ENCODE measurements at regions of chr2 and their contacts with region 1.

Region 1: DNA sequence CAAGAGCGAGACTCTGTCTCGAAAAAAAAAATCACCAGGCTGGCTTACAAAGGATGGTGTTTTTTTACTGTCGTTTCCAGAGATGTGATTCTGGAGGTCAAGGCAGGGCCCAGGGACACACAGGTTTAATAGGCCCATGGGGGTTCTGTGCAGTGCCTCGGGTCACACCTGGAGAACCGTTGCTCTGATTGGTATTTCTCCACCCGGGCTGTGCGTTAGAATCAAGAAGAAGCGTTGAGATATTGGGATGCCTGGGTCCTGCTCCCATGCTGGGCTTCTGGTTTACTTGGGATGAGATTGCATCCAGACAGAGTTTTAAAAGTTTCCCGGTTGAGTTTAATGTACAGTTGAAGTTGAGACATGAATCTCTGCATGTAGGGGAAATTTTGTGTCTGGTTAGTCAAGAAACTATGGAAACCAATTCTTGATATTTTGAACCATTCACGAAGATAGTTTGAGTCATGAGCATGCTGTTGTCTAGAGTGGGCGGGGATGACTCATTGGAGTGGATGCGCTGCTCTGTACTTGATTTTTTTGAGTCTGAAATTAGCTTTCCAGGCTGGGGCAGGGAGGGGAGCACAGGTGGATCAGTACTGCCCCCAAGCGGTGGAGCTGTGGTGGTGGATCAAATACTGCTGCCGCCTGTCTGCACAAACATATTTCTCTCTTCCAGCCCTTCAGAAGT is 50.1 kb downstream of the GREB1 start:
- DNase-seq: peak; percentile 93
- H3K4me3 ChIP-seq: no peak overlapping the region
- H3K27ac ChIP-seq: no peak overlapping the region
- H3K4me1 ChIP-seq: peaks cover 13% of the 10 kb centered on the region
- H3K27me3 ChIP-seq: no peaks in the 10 kb centered on the region
- CTCF ChIP-seq: peak; percentile 94

Region 2: GRCh38 chr2:10935953-10936942 is 647.7 kb before region 1 on chr2:
- CTCF ChIA-PET with region 1: no interaction called
- POLR2A ChIA-PET with region 1: no interaction called
- intact Hi-C with region 1: no loop called
- DNase-seq: no peak
- H3K4me3 ChIP-seq: no peak overlapping the region
- H3K27ac ChIP-seq: no peak overlapping the region
- H3K4me1 ChIP-seq: no peaks in the 10 kb centered on the region
- H3K27me3 ChIP-seq: no peaks in the 10 kb centered on the region
- CTCF ChIP-seq: no peak

Region 3: GRCh38 chr2:11234309-11234708 is 349.7 kb before region 1 on chr2:
- CTCF ChIA-PET with region 1: interaction called, 4 read pairs
- POLR2A ChIA-PET with region 1: no interaction called
- intact Hi-C with region 1: loop called (anchors 2 kb)
- DNase-seq: peak; percentile 23
- H3K4me3 ChIP-seq: no peak overlapping the region
- H3K27ac ChIP-seq: no peak overlapping the region
- H3K4me1 ChIP-seq: no peaks in the 10 kb centered on the region
- H3K27me3 ChIP-seq: no peaks in the 10 kb centered on the region
- CTCF ChIP-seq: peak; percentile 65

Region 4: DNA sequence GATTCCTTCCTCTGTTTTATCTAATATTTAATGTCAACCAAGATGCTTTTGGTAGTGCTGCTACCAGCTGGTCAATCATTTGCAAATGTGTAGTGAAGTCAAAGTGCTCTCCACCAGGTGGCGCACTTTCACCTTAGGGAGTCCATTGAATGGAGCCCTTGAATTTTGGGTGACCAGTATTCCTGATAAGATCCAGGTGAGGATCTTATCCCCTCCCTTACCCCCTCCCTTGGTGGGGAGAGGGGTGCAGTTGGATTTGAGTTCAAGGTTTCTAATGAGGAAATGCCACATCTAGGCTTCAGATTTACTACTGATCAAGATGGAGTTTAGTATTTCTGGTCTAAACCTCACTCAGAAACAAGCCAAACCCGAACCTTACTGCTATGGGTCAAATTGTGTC is 106.0 kb before region 1 on chr2:
- CTCF ChIA-PET with region 1: interaction called, 63 read pairs
- POLR2A ChIA-PET with region 1: no interaction called
- intact Hi-C with region 1: loop called (anchors 1 kb)
- DNase-seq: peak; percentile 86
- H3K4me3 ChIP-seq: no peak overlapping the region
- H3K27ac ChIP-seq: no peak overlapping the region
- H3K4me1 ChIP-seq: peaks cover 4% of the 10 kb centered on the region
- H3K27me3 ChIP-seq: peaks cover 5% of the 10 kb centered on the region
- CTCF ChIP-seq: peak; percentile 89

Region 5: DNA sequence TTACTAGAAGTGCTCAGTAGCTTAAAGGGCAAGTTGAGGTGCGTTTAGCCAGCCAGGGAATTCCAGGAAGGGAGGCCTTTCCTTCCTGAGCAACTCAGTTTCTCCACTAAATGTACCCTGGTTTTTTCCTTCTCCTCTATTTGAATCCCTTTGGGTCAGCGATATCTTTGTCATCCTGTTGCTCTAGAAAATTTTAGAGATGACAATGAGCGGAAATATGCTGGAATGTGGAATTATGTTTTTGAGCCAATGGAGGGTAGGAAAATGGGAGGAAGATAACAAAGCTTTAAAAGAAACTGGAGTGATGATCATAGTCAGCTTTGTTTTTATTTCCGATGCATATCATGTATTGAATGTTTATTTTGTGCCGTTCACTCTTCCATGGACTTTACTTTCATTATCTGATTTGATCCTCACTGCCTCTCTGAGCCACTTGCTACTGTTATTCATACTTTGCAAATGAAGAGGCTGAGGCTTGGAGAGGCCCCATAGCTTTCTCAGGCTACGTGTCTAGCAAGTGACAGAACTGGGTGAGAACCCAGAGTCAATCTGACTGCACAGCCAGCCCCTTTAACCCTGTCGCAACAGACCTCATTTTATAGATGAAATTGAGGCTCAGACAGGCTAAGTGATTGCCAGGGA is 18.7 kb after region 1 on chr2:
- CTCF ChIA-PET with region 1: interaction called, 11 read pairs
- POLR2A ChIA-PET with region 1: no interaction called
- intact Hi-C with region 1: no loop called
- DNase-seq: no peak
- H3K4me3 ChIP-seq: no peak overlapping the region
- H3K27ac ChIP-seq: no peak overlapping the region
- H3K4me1 ChIP-seq: no peaks in the 10 kb centered on the region
- H3K27me3 ChIP-seq: no peaks in the 10 kb centered on the region
- CTCF ChIP-seq: no peak

Region 6: DNA sequence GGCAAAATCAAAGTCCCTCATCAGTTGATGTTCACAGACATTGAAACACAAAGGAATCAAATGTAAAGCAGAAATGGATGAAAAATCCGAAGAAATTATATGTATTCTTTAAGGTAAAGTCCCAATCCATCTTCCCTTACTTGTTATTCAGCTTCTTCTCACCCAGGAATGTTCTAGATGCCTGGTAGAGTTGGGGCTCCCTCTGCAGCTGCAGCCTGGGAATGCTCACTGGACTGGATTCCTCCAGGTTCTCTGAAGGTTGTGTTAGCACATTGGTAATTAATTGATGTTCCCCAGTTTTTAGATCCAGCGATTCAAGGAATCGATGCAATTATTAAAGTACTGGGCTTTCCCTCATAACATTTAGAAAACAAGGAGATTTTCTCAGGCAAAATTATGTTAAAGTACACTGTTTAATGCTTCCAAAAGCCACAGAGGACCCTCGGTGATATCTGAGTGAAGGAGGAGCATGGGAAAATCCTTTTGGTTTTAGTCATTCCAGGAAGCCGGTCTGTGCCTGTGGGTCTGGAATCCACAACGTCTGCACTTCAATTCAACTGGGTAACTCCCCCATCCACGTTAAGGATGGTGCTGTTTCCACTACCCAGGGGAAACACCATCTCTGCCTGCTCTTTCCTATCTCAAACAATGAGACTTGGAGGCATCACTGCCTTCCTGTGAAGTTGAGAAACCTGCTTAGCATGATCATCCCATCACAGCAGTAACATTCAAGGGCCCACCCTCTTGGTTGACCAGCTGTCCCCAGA is 64.0 kb after region 1 on chr2:
- CTCF ChIA-PET with region 1: no interaction called
- POLR2A ChIA-PET with region 1: no interaction called
- intact Hi-C with region 1: no loop called
- DNase-seq: no peak
- H3K4me3 ChIP-seq: no peak overlapping the region
- H3K27ac ChIP-seq: no peak overlapping the region
- H3K4me1 ChIP-seq: no peaks in the 10 kb centered on the region
- H3K27me3 ChIP-seq: no peaks in the 10 kb centered on the region
- CTCF ChIP-seq: peak; percentile 21; the same call in 1 of the 2 replicates

Measured in A673 (cell line).